ENCODE measurements at regions of chr11 and their contacts with region 1.

Region 1: GRCh38 chr11:13183094-13183825 is 94.3 kb upstream of the BMAL1 start:
- DNase-seq: peak; percentile 15

Region 2: GRCh38 chr11:12963792-12964536 is 219.3 kb before region 1 on chr11:
- CTCF ChIA-PET with region 1: interaction called, 10 read pairs
- POLR2A ChIA-PET with region 1: no interaction called
- DNase-seq: peak; percentile 82

Region 3: GRCh38 chr11:13169709-13170108 is 13.6 kb before region 1 on chr11:
- CTCF ChIA-PET with region 1: no interaction called
- POLR2A ChIA-PET with region 1: no interaction called
- DNase-seq: no peak

Region 4: DNA sequence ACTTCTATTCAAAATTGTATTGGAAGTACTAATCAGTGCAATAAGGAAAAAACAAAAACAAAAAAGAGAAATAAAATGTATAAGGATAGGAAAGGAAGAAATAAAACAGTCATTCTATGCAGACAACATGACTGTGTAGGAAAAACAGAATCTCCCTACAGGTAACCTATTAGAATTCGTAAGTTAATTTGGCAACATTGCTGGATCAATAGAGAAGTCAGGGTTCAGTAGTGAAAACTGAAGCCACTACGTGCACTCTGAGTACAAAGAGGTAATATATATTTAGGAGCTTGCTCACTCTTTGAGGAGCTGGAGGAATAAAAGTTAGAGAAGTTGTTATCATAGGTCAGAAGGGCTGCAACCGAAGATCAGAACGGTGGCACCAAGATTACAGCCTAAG is 10.4 kb after region 1 on chr11:
- CTCF ChIA-PET with region 1: no interaction called
- POLR2A ChIA-PET with region 1: no interaction called
- DNase-seq: no peak

Measured in HEK293T (cell line).